Activated CD4-positive, alpha-beta memory T cell treated with anti-CD3 and anti-CD28 coated beads, Interleukin-2, amount 10 ng/mL, durations not matched to agents 7 days and 5 days (primary cell): ENCODE measurements at regions of chr19 and their contacts with region 1.

Region 1: DNA sequence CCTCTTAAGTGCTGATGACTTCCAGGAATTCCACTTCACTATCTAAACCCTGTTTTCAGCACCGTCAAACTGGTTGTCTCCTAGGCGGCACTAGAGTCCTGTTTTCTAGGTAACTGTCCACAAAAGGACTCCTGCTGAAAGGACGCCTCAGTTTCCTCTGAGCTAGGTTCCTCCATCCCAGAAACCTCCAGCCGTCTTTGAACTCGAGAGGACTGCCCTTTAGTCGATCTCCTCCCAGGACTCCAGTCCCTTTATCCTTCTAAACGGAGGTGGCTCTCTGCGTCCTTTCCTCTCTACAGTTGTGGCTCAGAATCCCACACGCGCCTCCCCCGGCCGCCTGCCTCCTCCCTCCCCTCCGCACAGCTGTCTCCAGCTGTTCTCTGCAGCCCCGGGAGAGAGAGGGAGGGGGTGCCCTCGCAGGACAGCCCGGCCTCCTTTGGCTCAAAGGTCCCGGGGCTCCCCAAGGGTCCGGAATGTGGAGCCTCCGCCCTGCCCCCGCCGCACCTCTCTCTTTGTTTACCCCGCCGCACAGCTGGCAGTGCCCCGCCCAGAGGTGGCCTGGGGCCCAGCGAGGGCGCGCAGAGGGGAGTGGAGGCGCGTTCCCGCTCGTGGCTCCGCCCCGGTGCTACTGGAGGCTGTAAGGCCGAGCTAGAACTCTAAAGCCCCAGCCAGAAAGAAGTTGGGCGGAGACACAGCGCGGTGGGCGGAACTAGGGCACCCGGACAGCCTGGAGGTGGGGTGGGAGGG is 2.4 kb downstream of the LTBP4 start:
- DNase-seq: peak; percentile 100
- H3K4me3 Mint-ChIP-seq: peak overlapping the region; percentile 86
- H3K27ac Mint-ChIP-seq: peak overlapping the region; percentile 96
- H3K4me1 Mint-ChIP-seq: peaks cover 78% of the 10 kb centered on the region
- H3K27me3 Mint-ChIP-seq: peaks cover 30% of the 10 kb centered on the region

Region 2: GRCh38 chr19:40305403-40305802 is 298.2 kb before region 1 on chr19:
- CTCF ChIA-PET with region 1: interaction called, 15 read pairs
- POLR2A ChIA-PET with region 1: no interaction called
- DNase-seq: peak; percentile 83
- H3K4me3 Mint-ChIP-seq: no peak overlapping the region
- H3K27ac Mint-ChIP-seq: no peak overlapping the region
- H3K4me1 Mint-ChIP-seq: peaks cover 3% of the 10 kb centered on the region
- H3K27me3 Mint-ChIP-seq: no peaks in the 10 kb centered on the region

Region 3: GRCh38 chr19:40549007-40549708 is 54.4 kb before region 1 on chr19:
- CTCF ChIA-PET with region 1: interaction called, 17 read pairs
- POLR2A ChIA-PET with region 1: no interaction called
- DNase-seq: peak; percentile 71
- H3K4me3 Mint-ChIP-seq: no peak overlapping the region
- H3K27ac Mint-ChIP-seq: no peak overlapping the region
- H3K4me1 Mint-ChIP-seq: peaks cover 8% of the 10 kb centered on the region
- H3K27me3 Mint-ChIP-seq: peaks cover 48% of the 10 kb centered on the region

Region 4: DNA sequence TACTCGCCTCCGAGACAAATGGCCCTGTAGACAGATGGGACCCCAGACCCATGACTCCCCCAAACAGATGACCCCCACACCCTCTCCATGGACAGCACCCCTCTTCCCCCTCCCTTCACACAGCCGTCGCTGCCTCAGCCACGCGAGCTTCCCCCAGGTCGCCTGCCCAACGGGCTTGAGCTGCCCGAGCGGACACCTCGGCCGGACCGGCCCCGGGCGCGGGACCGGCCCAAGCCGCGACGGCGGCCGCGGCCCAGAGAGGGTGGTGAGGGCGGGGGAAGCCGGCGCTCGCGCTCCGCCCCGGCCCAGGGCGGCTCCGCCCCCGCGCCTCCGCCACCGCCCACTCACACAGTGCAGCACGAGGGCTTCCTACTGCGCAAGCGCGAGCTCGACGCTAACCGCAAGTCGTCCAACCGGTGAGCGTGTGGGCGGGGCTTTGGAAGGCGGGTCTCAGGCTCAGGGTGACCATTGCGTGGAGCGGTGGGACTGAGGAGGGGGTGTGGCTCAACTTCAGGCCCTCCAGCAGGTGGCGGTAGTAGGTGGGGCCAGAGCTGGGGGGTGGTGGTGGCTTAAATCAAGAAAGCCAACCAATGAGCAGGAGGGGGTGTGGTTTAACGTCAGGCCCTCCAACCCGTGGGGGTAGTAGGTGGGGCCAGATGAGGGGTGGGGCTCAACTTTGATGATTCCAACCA is 33.1 kb before region 1 on chr19:
- CTCF ChIA-PET with region 1: interaction called, 20 read pairs
- POLR2A ChIA-PET with region 1: interaction called, 10 read pairs
- DNase-seq: peak; percentile 98
- H3K4me3 Mint-ChIP-seq: peak overlapping the region; percentile 49
- H3K27ac Mint-ChIP-seq: peak overlapping the region; percentile 44
- H3K4me1 Mint-ChIP-seq: peaks cover 18% of the 10 kb centered on the region
- H3K27me3 Mint-ChIP-seq: peaks cover 32% of the 10 kb centered on the region

Region 5: DNA sequence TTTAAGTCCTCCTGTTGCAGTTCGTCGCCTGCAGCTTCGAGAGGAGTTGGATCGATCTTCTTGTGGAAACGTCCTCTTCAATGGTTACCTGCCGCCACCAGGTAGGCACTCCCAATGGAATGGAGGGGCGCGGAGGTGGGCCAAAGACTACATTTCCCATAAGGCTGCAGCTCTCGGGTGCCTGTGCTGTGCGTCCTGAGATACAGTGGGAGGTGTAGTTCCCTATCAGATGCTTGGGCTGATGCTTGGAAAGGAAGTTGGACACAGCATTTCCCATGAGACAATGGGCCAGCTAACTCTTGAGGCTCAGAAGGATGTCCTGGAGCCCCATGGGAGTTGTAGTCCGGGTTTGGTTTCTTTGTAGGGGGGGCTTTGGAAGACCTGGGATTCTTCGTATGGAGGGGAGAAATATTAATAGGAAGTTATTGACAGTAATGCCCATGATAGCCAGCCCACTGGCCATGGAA is 25.1 kb before region 1 on chr19:
- CTCF ChIA-PET with region 1: interaction called, 6 read pairs
- POLR2A ChIA-PET with region 1: interaction called, 12 read pairs
- DNase-seq: no peak
- H3K4me3 Mint-ChIP-seq: peak overlapping the region; percentile 85
- H3K27ac Mint-ChIP-seq: no peak overlapping the region
- H3K4me1 Mint-ChIP-seq: peaks cover 24% of the 10 kb centered on the region
- H3K27me3 Mint-ChIP-seq: no peaks in the 10 kb centered on the region

Region 6: GRCh38 chr19:40633207-40633606 is 29.6 kb after region 1 on chr19:
- CTCF ChIA-PET with region 1: interaction called, 65 read pairs
- POLR2A ChIA-PET with region 1: interaction called, 11 read pairs
- DNase-seq: no peak
- H3K4me3 Mint-ChIP-seq: no peak overlapping the region
- H3K27ac Mint-ChIP-seq: no peak overlapping the region
- H3K4me1 Mint-ChIP-seq: peaks cover 9% of the 10 kb centered on the region
- H3K27me3 Mint-ChIP-seq: peaks cover 7% of the 10 kb centered on the region

Region 7: GRCh38 chr19:40640744-40641143 is 37.2 kb after region 1 on chr19:
- CTCF ChIA-PET with region 1: interaction called, 65 read pairs
- POLR2A ChIA-PET with region 1: interaction called, 11 read pairs
- DNase-seq: no peak
- H3K4me3 Mint-ChIP-seq: no peak overlapping the region
- H3K27ac Mint-ChIP-seq: no peak overlapping the region
- H3K4me1 Mint-ChIP-seq: peaks cover 1% of the 10 kb centered on the region
- H3K27me3 Mint-ChIP-seq: peaks cover 1% of the 10 kb centered on the region